Posterior vena cava (tissue), 2 donors: ENCODE measurements at regions of chr4 and their contacts with region 1.

Region 1: DNA sequence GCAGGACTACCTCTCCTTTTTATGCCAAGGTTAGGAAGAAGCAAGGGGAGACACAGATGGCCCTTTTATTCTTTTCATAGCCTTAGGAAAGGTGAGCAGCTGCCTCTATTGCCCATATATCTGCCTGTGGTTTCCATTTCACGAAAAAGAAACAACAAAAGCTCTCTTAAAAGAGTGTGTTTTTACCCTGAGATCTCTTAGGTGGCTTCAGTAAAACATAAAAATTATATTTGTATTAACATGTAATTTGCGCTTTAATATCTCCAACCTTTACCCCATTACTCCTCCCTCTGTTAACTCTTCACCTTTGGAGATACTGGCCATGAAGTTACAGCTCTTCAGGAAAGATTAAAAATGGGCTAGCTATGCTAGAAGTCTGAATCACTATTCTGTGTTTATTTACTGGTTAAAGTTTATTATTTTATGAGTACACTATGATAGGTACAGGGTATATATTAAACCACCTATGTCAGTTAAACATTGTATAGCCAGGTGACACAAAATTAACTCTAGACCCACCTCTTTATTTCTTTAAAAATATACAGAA is 15.0 kb upstream of the SULT1B1 start:
- DNase-seq: no peak

Region 2: DNA sequence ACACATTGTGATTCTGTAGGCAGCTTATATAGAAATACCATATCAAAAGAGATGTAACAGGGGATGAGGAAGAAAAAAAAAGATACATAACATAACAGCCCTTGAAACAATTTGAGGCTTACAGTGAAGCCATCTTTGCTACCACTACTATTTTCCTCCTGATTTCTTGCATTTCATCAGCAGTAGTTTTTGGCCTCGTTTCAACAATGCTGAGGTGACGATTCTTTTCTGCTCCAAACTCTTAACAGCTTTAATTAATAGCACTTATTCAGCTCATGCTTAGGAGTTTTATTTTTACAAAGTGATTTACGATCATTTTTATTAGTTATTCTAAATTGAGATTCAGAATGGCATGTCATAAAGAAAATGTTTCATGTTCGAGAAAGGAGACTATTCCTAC is 1381.2 kb after region 1 on chr4:
- intact Hi-C with region 1: no loop called
- DNase-seq: no peak

Region 3: GRCh38 chr4:71518283-71518989 is 1743.0 kb after region 1 on chr4:
- intact Hi-C with region 1: loop called in 1 of 2 experiments (anchors 5 kb)
- DNase-seq: peak; percentile 72